IMR-90 (cell line): ENCODE measurements at regions of chr12 and their contacts with region 1.

Region 1: GRCh38 chr12:69163681-69164362 is 75.5 kb upstream of the CPSF6 start:
- DNase-seq: no peak
- ATAC-seq: no peak
- H3K4me3 ChIP-seq: no peak overlapping the region
- H3K27ac ChIP-seq: no peak overlapping the region
- H3K4me1 ChIP-seq: no peaks in the 10 kb centered on the region
- H3K27me3 ChIP-seq: peaks cover 5% of the 10 kb centered on the region; the same call in 1 of the 2 replicates
- CTCF ChIP-seq: no peak
- POLR2A ChIP-seq: no peak
- RAD21 ChIP-seq: no peak

Region 2: GRCh38 chr12:69189378-69189978 is 25.7 kb after region 1 on chr12:
- CTCF ChIA-PET with region 1: no interaction called
- POLR2A ChIA-PET with region 1: no interaction called
- dilution Hi-C with region 1: no loop called
- in situ Hi-C with region 1: no loop called
- intact Hi-C with region 1: loop called (anchors 1 kb)
- DNase-seq: no peak
- ATAC-seq: no peak
- H3K4me3 ChIP-seq: no peak overlapping the region
- H3K27ac ChIP-seq: no peak overlapping the region
- H3K4me1 ChIP-seq: no peaks in the 10 kb centered on the region
- H3K27me3 ChIP-seq: no peaks in the 10 kb centered on the region
- CTCF ChIP-seq: no peak
- POLR2A ChIP-seq: no peak
- RAD21 ChIP-seq: no peak